IMR-90 (cell line): ENCODE measurements at regions of chr9 and their contacts with region 1.

Region 1: DNA sequence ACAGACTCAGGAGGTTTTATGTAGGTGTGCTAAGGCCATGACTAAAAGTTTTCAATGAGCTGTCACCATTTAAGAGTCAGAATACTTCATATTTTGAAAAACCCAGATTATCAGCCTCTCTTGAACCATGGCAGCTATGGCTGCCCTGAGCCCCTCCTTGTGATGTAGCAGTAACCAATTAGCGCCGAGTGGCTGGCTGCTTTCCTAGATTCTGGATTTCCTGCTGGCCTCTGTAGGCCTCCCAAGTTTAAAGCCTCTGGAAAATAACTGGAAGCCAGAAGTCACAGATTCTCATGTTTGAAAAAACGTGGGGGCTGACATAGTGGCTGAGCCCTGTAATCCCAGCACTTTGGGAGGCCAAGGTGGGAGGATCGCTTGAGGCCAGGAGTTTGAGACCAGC is 25.5 kb downstream of the DAB2IP start:
- DNase-seq: no peak
- ATAC-seq: no peak
- H3K4me3 ChIP-seq: no peak overlapping the region
- H3K27ac ChIP-seq: no peak overlapping the region
- H3K4me1 ChIP-seq: peaks cover 9% of the 10 kb centered on the region
- H3K27me3 ChIP-seq: no peaks in the 10 kb centered on the region
- CTCF ChIP-seq: no peak
- POLR2A ChIP-seq: no peak
- RAD21 ChIP-seq: no peak

Region 2: DNA sequence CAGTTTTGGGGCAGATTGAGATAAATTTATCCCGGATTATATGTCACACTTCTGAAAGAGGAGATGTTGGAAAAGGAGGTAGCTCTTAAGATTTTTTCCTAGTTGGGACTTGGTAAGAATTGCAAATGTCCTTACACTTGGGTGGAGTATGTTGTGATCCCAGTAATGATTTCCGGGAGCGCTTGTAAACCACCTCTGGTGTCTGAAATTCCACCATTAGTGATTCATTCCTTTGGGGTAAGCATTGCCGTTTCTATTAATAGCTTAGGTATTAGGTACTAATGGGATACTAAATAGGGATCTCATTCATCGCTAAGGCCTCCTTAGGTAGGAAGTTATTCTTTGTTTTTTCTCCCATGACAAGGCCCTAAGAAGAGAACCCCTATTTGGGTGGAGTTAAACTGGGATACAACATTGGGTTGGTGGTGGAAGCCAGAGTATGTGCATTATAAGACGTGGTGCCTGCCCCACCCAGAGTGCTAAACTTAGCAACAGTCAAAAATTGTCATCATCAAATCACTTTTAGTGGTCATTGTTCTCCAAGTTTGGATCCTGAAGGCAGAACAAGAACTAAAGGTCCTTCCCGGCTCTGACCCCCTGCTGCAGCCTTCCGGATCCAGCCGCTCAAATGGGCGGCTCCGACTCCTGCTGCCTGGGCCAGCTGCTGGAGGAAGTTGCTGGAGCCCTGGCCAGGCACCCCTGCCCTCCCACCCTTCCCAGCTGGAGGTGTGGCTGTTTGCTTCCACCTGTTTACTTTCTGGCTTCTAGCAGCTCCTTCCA is 57.2 kb before region 1 on chr9:
- CTCF ChIA-PET with region 1: no interaction called
- POLR2A ChIA-PET with region 1: no interaction called
- dilution Hi-C with region 1: no loop called
- in situ Hi-C with region 1: no loop called
- intact Hi-C with region 1: loop called (anchors 1 kb)
- DNase-seq: no peak
- ATAC-seq: no peak
- H3K4me3 ChIP-seq: no peak overlapping the region
- H3K27ac ChIP-seq: no peak overlapping the region
- H3K4me1 ChIP-seq: peaks cover 2% of the 10 kb centered on the region; the same call in 1 of the 2 replicates
- H3K27me3 ChIP-seq: no peaks in the 10 kb centered on the region
- CTCF ChIP-seq: no peak
- POLR2A ChIP-seq: no peak
- RAD21 ChIP-seq: no peak

Region 3: DNA sequence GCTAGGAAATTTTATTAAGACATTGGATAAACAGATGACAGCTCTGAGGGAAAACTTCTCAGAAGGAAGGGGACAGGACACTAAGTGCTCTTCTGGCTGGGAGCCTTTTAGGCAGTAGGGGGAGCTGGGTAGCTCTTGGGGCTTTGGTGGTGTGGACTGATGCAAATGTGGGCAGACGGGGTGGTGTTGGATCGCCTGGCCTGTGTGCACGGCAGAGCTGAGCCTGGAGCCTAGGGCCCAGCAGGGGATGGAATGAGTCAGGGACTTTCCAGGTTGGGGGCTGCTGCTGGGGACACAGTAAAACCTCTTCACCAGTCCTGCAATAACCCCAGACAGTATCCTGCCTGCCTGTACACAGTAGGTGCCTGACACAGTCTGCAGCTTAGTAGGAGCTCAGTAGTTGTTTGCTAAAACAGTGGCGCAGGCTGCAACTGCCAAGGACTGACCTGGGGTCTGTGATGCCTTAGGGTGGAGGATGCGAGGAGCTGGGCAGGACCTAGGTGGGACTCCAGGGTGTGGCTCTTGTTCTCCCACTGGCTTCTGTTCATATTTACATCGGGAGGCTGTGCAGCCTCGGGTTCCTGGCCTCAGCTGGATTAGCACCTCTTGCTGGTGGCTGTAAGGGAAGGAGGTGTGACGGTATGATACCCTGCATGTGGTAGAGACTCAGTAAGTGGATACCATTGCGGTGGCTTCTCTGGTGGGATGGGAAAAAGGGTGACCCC is 58.3 kb after region 1 on chr9:
- CTCF ChIA-PET with region 1: no interaction called
- POLR2A ChIA-PET with region 1: no interaction called
- dilution Hi-C with region 1: no loop called
- in situ Hi-C with region 1: no loop called
- intact Hi-C with region 1: no loop called
- DNase-seq: peak; percentile 80
- ATAC-seq: peak; percentile 66
- H3K4me3 ChIP-seq: no peak overlapping the region
- H3K27ac ChIP-seq: peak overlapping the region; percentile 30; the same call in 1 of the 2 replicates
- H3K4me1 ChIP-seq: peaks cover 35% of the 10 kb centered on the region
- H3K27me3 ChIP-seq: no peaks in the 10 kb centered on the region
- CTCF ChIP-seq: peak; percentile 68
- POLR2A ChIP-seq: no peak
- RAD21 ChIP-seq: peak; percentile 71